AG04450 (cell line): ENCODE measurements at regions of chr9 and their contacts with region 1.

Region 1: DNA sequence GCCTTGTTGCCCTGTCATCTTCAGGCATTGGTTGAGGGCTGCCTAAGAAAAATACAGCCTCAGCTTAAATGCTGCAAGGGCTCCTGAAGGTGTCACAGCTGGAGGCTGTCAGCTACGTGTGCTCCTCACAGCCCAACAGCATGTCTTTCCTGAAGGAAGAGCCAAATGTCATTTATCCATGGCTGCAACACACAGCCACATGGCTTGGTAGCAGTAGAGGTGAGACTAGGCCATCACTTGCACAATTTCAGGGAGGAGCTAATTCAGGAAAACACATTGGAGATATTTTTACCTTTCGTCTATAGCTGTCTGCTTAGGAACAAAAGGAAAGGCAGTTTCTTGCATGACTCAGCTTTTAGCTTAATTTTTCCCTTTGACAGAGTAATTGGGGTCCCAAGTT is 260.7 kb downstream of the SYK start:
- DNase-seq: no peak
- H3K4me3 ChIP-seq: no peak overlapping the region
- H3K27ac ChIP-seq: no peak overlapping the region
- H3K27me3 ChIP-seq: no peaks in the 10 kb centered on the region
- CTCF ChIP-seq: no peak

Region 2: GRCh38 chr9:91150998-91151717 is 88.9 kb after region 1 on chr9:
- CTCF ChIA-PET with region 1: no interaction called
- POLR2A ChIA-PET with region 1: no interaction called
- DNase-seq: no peak
- H3K4me3 ChIP-seq: no peak overlapping the region
- H3K27ac ChIP-seq: no peak overlapping the region
- H3K27me3 ChIP-seq: no peaks in the 10 kb centered on the region
- CTCF ChIP-seq: no peak

Region 3: DNA sequence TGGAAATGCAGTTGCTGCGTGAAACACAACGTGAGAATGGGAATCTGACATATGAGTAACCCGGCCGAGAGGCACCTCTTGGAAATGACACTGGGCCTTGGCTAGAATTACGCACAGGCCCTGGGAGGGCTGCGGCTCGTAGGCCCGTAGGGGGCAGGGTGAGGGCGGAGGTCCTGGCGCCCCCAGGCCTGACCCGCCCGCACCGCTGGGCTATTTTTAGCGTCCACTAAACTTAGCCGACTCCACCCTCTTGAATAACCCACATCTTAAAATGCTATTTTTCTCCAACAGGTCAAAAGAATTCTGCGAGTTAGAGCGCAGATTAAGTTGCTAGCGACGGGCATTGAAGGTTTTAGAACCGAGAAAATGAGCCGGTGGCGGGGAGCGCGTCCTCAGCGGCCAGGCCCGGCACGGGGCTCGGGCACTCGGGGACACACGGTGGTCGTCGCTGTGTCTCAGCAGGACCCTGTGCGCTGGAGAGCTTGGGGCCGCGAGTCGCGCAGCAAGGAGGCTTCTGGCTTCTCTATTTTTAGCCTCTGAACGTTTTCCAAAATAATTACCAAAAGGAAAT is 130.9 kb after region 1 on chr9:
- CTCF ChIA-PET with region 1: no interaction called
- POLR2A ChIA-PET with region 1: interaction called, 12 read pairs
- DNase-seq: peak; percentile 97
- H3K4me3 ChIP-seq: peak overlapping the region; percentile 52
- H3K27ac ChIP-seq: peak overlapping the region; percentile 100
- H3K27me3 ChIP-seq: no peaks in the 10 kb centered on the region
- CTCF ChIP-seq: no peak

Region 4: DNA sequence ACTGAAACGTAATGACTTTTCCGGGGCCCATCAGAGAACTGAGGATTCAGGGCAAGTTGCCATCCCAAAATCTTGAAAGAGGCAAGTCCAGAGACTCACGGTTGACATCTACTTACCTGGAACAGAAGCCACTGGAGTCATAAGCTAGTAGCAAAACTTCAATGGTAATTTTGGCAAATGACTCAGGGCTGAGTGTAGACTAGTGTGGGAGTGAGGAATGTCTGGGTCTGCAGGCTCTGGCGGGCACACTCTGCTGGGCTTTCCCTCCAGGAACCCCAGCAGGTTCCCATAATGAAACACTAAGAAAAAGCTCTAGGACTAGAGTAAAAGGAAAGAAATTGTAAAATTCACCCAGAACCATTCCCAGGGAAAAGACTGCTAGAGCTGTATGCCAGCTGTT is 484.3 kb after region 1 on chr9:
- CTCF ChIA-PET with region 1: no interaction called
- POLR2A ChIA-PET with region 1: no interaction called
- DNase-seq: no peak
- H3K4me3 ChIP-seq: no peak overlapping the region
- H3K27ac ChIP-seq: no peak overlapping the region
- H3K27me3 ChIP-seq: no peaks in the 10 kb centered on the region
- CTCF ChIP-seq: no peak